HAP-1 (cell line): ENCODE measurements at regions of chr13 and their contacts with region 1.

Region 1: GRCh38 chr13:29850224-29850898 is at the start of gene UBL3:
- DNase-seq: peak; percentile 91 to 96
- H3K4me3 ChIP-seq: peak within 1 kb of the TSS; percentile 78
- H3K4me1 ChIP-seq: peaks cover 20% of the 10 kb centered on the region
- H3K27me3 ChIP-seq: 0 out of 2 replicates have a peak, but pooled peaks cover 5% of the 10 kb centered on the region

Region 2: GRCh38 chr13:28384789-28385188 is 1465.6 kb before region 1 on chr13:
- in situ Hi-C with region 1: no loop called
- DNase-seq: no peak
- H3K4me3 ChIP-seq: no peak overlapping the region
- H3K4me1 ChIP-seq: peaks cover 15% of the 10 kb centered on the region
- H3K27me3 ChIP-seq: 0 out of 2 replicates have a peak, but pooled peaks cover 3% of the 10 kb centered on the region

Region 3: GRCh38 chr13:30415430-30416030 is 565.2 kb after region 1 on chr13:
- in situ Hi-C with region 1: loop called (anchors 10 kb)
- DNase-seq: no peak
- H3K4me3 ChIP-seq: no peak overlapping the region
- H3K4me1 ChIP-seq: no peaks in the 10 kb centered on the region
- H3K27me3 ChIP-seq: no peaks in the 10 kb centered on the region